ENCODE measurements at regions of chr2 and their contacts with region 1.

Region 1: GRCh38 chr2:186862869-186863709 is 14.1 kb upstream of the ZSWIM2 start:
- DNase-seq: no peak
- ATAC-seq: peak; percentile 51 to 61
- H3K4me3 ChIP-seq: no peak overlapping the region
- H3K27ac ChIP-seq: no peak overlapping the region
- H3K4me1 ChIP-seq: no peaks in the 10 kb centered on the region
- H3K27me3 ChIP-seq: no peaks in the 10 kb centered on the region

Region 2: GRCh38 chr2:186349508-186349907 is 513.6 kb before region 1 on chr2:
- intact Hi-C with region 1: no loop called
- DNase-seq: no peak
- ATAC-seq: no peak
- H3K4me3 ChIP-seq: no peak overlapping the region
- H3K27ac ChIP-seq: no peak overlapping the region
- H3K4me1 ChIP-seq: no peaks in the 10 kb centered on the region
- H3K27me3 ChIP-seq: no peaks in the 10 kb centered on the region

Region 3: DNA sequence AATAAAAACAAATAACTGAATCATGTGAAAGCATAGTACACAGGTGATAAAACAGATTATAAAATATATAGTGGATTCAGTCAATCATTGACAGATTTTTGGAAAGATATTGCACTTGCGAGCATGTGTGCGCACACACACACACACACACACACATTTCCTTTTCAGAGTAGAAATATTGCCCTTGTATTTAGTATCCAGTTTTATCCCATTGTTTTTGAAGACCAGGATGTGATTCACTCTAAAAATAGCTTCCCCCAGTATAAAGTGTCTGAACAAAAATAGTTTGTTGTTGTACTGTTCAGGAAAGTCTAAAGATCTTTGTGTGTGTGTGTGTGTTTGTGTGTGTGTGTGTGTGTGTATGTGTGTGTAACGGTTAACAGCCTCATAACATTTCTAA is 439.5 kb after region 1 on chr2:
- intact Hi-C with region 1: loop called in 1 of 4 experiments (anchors 10 kb)
- DNase-seq: no peak
- ATAC-seq: peak; percentile 26 to 90
- H3K4me3 ChIP-seq: no peak overlapping the region
- H3K27ac ChIP-seq: no peak overlapping the region
- H3K4me1 ChIP-seq: peaks cover 2% of the 10 kb centered on the region
- H3K27me3 ChIP-seq: no peaks in the 10 kb centered on the region

Region 4: GRCh38 chr2:187453078-187453641 is 590.1 kb after region 1 on chr2:
- intact Hi-C with region 1: loop called (anchors 5 to 10 kb)
- DNase-seq: no peak
- ATAC-seq: no peak
- H3K4me3 ChIP-seq: no peak overlapping the region
- H3K27ac ChIP-seq: no peak overlapping the region
- H3K4me1 ChIP-seq: no peaks in the 10 kb centered on the region
- H3K27me3 ChIP-seq: no peaks in the 10 kb centered on the region

Region 5: DNA sequence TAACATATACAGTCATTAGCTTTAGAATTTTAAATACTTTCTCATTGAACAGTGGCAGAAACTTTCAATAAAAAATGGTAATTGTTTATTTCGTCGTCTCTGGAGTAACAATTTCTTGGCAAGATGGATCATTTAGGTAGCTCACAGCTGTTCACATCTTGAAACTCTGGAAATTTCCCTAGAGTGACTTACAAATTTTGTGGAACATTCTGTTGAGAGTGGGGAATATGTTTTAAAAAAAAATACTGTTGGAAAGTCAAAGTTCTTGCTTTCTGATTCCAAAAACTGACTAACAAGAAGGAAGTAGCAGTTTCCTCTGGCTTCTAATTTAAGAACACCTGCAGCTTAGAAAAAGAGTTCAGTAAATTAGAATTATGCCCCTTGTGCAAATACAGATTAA is 596.2 kb after region 1 on chr2:
- intact Hi-C with region 1: loop called (anchors 5 to 10 kb)
- DNase-seq: no peak
- ATAC-seq: no peak
- H3K4me3 ChIP-seq: no peak overlapping the region
- H3K27ac ChIP-seq: no peak overlapping the region
- H3K4me1 ChIP-seq: no peaks in the 10 kb centered on the region
- H3K27me3 ChIP-seq: no peaks in the 10 kb centered on the region